ENCODE measurements at regions of chr3 and their contacts with region 1.

Region 1: DNA sequence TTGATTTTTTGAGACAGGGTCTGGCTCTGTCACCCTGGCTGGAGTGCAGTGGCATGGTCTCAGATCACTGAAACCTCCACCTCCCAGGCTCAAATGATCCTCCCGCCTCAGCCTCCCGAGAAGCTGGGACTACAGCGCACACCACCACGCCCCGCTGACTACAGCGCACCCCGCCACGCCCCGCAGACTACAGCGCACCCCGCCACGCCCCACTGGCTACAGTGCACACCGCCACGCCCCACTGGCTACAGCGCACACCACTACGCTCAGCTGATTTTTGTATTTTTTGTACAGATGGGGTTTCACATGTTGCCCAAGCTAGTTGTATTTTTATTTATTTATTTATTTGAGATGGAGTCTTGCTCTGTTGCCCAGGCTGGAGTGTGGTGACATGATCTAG is 35.6 kb downstream of the SLC51A start:
- DNase-seq: no peak
- CTCF ChIP-seq: no peak

Region 2: DNA sequence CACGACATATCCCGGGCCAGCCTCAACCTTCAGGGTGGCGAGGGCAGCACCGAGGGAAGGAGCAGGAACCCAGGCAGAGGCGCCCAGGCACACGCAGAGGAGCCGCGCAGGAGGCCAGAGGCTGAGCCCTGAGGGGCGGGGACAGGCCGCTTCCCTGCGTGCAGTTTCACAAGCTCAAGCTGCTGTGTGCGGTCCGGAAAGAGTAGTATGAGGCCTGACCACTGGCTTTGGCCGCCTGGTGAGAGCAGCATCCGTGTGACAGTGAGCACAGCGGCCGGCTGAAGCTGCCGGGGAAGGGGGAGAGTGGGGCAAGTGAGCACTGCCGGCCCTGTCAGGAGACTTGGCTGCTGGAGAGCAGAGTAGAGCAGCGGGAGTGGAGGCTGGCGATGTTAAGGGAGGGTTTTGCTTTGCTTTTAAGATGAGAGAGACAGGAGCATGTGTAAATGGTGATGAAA is 49.4 kb before region 1 on chr3:
- in situ Hi-C with region 1: no loop called
- DNase-seq: peak; percentile 73
- CTCF ChIP-seq: no peak

Region 3: GRCh38 chr3:196518966-196519717 is 267.2 kb after region 1 on chr3:
- in situ Hi-C with region 1: loop called (anchors 10 kb)
- DNase-seq: peak; percentile 37
- CTCF ChIP-seq: no peak